ENCODE measurements at regions of chr19 and their contacts with region 1.

Region 1: GRCh38 chr19:49127674-49128544 is 8.6 kb downstream of the PPFIA3 start:
- DNase-seq: peak; percentile 98
- H3K4me3 ChIP-seq: no peak overlapping the region
- H3K27ac ChIP-seq: no peak overlapping the region
- H3K4me1 ChIP-seq: no peaks in the 10 kb centered on the region
- H3K27me3 ChIP-seq: peaks cover 0 to 4% of the 10 kb centered on the region in 2 experiments
- CTCF ChIP-seq: peak in 1 of 2 donors; percentile 38
- POLR2A ChIP-seq: no peak

Region 2: GRCh38 chr19:49085020-49085867 is 42.7 kb before region 1 on chr19 and contains the start of gene SNRNP70:
- CTCF ChIA-PET with region 1: no interaction called
- POLR2A ChIA-PET with region 1: interaction called, 3 read pairs
- dilution Hi-C with region 1: no loop called
- intact Hi-C with region 1: loop called (anchors 5 kb)
- DNase-seq: peak; percentile 99
- H3K4me3 ChIP-seq: peak within 1 kb of the TSS; percentile 75 to 93 (median 89)
- H3K27ac ChIP-seq: peak within 1 kb of the TSS; percentile 73
- H3K4me1 ChIP-seq: peaks cover 14% of the 10 kb centered on the region
- H3K27me3 ChIP-seq: peaks cover 2 to 3% of the 10 kb centered on the region in 2 experiments
- CTCF ChIP-seq: no peak
- POLR2A ChIP-seq: peak; percentile 95
- total RNA-seq, gene SNRNP70: 215 and 228 TPM in 2 replicates

Region 3: DNA sequence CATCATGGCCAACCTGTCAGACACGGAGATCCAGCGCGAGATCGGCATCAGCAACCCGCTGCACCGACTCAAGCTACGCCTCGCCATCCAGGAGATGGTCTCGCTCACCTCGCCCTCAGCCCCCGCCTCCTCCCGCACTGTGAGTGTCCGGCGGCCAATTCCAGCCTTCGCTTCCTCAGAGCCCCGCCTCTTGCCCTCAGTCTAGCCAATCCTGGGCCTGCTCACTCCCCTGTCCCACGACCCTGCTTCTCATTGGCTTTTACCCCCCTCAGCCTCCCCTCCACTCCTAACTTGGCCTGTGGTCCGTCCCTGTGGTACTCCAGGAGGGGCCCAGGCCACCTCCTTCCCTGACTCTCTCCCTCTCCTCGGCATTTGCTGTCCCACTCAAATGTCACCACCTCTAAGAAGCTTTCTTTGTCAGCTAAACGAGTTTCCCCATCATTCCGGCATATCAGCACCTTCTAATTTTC is 15.0 kb after region 1 on chr19:
- CTCF ChIA-PET with region 1: interaction called, 8 read pairs
- POLR2A ChIA-PET with region 1: no interaction called
- dilution Hi-C with region 1: no loop called
- intact Hi-C with region 1: loop called (anchors 2 kb)
- DNase-seq: peak; percentile 92
- H3K4me3 ChIP-seq: peak overlapping the region in 2 of 3 experiments; percentile 31 to 47
- H3K27ac ChIP-seq: no peak overlapping the region
- H3K4me1 ChIP-seq: peaks cover 5% of the 10 kb centered on the region
- H3K27me3 ChIP-seq: peaks cover 0 to 4% of the 10 kb centered on the region in 2 experiments
- CTCF ChIP-seq: no peak
- POLR2A ChIP-seq: peak; percentile 54

Region 4: GRCh38 chr19:49355909-49356353 is 228.0 kb after region 1 on chr19:
- CTCF ChIA-PET with region 1: no interaction called
- POLR2A ChIA-PET with region 1: interaction called, 10 read pairs
- dilution Hi-C with region 1: no loop called
- intact Hi-C with region 1: no loop called
- DNase-seq: no peak
- H3K4me3 ChIP-seq: no peak overlapping the region
- H3K27ac ChIP-seq: peak overlapping the region; percentile 30
- H3K4me1 ChIP-seq: peaks cover 25% of the 10 kb centered on the region
- H3K27me3 ChIP-seq: no peaks in the 10 kb centered on the region
- CTCF ChIP-seq: no peak
- POLR2A ChIP-seq: no peak